PC-9 (cell line): ENCODE measurements at regions of chr16 and their contacts with region 1.

Region 1: GRCh38 chr16:75096663-75097119 is 19.9 kb downstream of the LDHD start:
- DNase-seq: peak; percentile 77 to 83
- H3K4me3 ChIP-seq: peak overlapping the region; percentile 26; the same call in 1 of the 2 replicates
- H3K27ac ChIP-seq: peak overlapping the region; percentile 55
- H3K4me1 ChIP-seq: peaks cover 42% of the 10 kb centered on the region
- H3K27me3 ChIP-seq: no peaks in the 10 kb centered on the region
- CTCF ChIP-seq: peak; percentile 80

Region 2: GRCh38 chr16:74984535-74985296 is 112.0 kb before region 1 on chr16 and contains the start of gene WDR59:
- CTCF ChIA-PET with region 1: no interaction called
- POLR2A ChIA-PET with region 1: interaction called, 16 read pairs
- intact Hi-C with region 1: no loop called
- DNase-seq: peak; percentile 99
- H3K4me3 ChIP-seq: peak within 1 kb of the TSS; percentile 89
- H3K27ac ChIP-seq: peak within 1 kb of the TSS; percentile 59
- H3K4me1 ChIP-seq: 0 out of 2 replicates have a peak, but pooled peaks cover 8% of the 10 kb centered on the region
- H3K27me3 ChIP-seq: no peaks in the 10 kb centered on the region
- CTCF ChIP-seq: no peak
- total RNA-seq, gene WDR59: 97.0 and 97.1 TPM in 2 replicates

Region 3: GRCh38 chr16:75029557-75030253 is 67.0 kb before region 1 on chr16:
- CTCF ChIA-PET with region 1: interaction called, 23 read pairs
- POLR2A ChIA-PET with region 1: no interaction called
- intact Hi-C with region 1: no loop called
- DNase-seq: peak; percentile 65 to 91
- H3K4me3 ChIP-seq: no peak overlapping the region
- H3K27ac ChIP-seq: peak overlapping the region; percentile 71
- H3K4me1 ChIP-seq: peaks cover 66% of the 10 kb centered on the region
- H3K27me3 ChIP-seq: no peaks in the 10 kb centered on the region
- CTCF ChIP-seq: no peak

Region 4: DNA sequence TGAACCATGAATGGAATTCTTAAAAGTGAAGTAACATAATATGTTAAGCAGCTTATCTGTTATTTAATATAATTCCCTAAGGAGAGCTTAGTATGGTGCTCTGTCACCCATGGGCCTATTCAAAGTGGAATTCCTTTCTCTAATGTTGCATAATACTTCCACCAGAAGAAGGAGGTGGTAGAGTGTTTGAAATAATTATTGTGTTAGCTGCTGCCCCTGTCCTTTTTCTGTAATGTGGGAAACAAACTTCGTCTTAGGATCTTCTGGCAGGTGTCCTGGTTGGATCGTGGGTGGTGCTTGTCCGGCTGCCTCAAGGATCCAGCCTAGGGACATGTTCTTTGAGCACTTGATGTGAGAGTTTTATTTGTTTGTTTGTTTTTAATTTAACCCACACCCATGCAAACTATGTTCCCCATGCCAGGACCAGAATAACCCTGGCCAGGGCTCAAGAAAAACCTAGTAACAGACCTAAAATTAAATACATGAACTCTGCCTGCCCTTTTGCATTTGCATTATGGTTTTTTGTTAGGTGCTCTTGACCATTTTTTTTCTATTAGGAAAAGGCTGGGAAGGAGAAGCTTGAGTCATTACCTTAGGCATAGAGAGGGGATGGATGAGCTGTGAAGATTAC is 51.8 kb before region 1 on chr16:
- CTCF ChIA-PET with region 1: no interaction called
- POLR2A ChIA-PET with region 1: interaction called, 4 read pairs
- intact Hi-C with region 1: loop called (anchors 2 kb)
- DNase-seq: peak; percentile 67 to 96
- H3K4me3 ChIP-seq: no peak overlapping the region
- H3K27ac ChIP-seq: peak overlapping the region; percentile 81
- H3K4me1 ChIP-seq: peaks cover 69% of the 10 kb centered on the region
- H3K27me3 ChIP-seq: no peaks in the 10 kb centered on the region
- CTCF ChIP-seq: no peak